Heart left ventricle (tissue), 16 donors: ENCODE measurements at regions of chr2 and their contacts with region 1.

Region 1: DNA sequence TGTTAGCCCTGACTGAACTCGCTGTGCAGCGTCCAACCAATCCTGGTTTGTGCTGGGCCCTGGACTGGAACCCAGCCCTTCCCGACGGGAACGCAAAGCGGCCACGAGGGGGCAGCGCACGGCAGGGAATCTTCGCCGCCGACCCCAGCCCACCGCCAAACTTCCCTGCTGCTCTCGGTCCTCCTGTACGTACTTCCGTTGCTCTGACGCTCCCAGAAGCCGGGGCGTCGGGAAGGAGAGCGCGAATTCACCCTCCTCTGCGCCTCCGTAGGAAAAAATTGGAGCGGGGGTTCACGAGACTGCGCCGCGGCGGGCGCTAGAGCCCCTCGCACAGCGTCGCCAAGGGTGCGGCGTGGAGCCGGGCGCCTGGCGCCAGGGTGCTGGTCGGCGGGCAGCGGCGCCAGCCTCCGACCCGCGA is 948 bp upstream of the SH3RF3 start:
- DNase-seq: peak; percentile 80 to 90 (median 86)
- ATAC-seq: peak; percentile 75 to 91 (median 89)
- H3K4me3 ChIP-seq: peak overlapping the region; percentile 64 to 80 (median 73)
- H3K27ac ChIP-seq: peak overlapping the region; percentile 55 to 86 (median 78)
- H3K4me1 ChIP-seq: peaks cover 0 to 35% (median 18%) of the 10 kb centered on the region in 12 donors
- H3K27me3 ChIP-seq: peaks cover 0 to 15% (median 0%) of the 10 kb centered on the region in 9 donors
- CTCF ChIP-seq: peak; percentile 82 to 97 (median 94)
- POLR2A ChIP-seq: no peak

Region 2: GRCh38 chr2:109046925-109047508 is 81.0 kb before region 1 on chr2:
- intact Hi-C with region 1: no loop called
- DNase-seq: no peak
- ATAC-seq: peak in 2 of 4 donors; percentile 49 to 50
- H3K4me3 ChIP-seq: no peak overlapping the region
- H3K27ac ChIP-seq: no peak overlapping the region
- H3K4me1 ChIP-seq: no peaks in the 10 kb centered on the region
- H3K27me3 ChIP-seq: no peaks in the 10 kb centered on the region
- CTCF ChIP-seq: no peak
- POLR2A ChIP-seq: no peak

Region 3: DNA sequence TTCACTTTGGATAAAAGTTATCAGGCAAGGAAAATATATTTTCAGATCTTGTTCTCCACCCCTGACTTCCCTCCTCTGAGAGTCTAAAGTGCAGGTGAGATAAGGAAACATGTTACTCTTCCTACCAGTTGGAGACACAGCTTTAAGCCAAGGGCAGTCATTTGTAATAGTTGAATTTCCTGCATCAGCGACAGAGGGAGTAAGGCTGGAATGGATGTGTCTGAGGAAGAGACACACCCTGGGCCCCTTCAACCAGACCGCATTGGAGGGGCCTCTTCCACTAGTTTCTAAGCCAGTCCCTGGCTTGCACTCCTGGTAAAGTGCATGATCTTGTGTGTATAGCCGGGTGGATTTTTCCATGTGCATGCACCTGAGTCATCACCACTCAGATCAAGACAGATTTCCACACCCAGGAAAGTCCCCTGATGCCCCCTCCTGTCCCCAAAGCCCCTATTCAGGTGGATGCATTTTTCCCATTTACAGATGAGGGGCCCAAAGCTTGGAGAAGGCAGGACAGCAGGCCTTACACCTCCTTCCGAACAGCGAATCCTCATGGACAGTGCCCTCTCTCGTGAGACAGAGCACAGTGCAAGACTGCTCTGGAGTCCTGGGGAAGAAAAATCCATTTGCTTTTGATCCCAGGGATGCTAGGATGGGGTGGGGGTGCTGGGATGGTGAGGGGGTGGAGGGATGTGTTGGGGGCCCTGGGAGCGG is 65.8 kb before region 1 on chr2:
- intact Hi-C with region 1: no loop called
- DNase-seq: no peak
- ATAC-seq: no peak
- H3K4me3 ChIP-seq: no peak overlapping the region
- H3K27ac ChIP-seq: no peak overlapping the region
- H3K4me1 ChIP-seq: peaks cover 0 to 29% (median 7%) of the 10 kb centered on the region in 12 donors
- H3K27me3 ChIP-seq: peaks cover 0 to 4% (median 0%) of the 10 kb centered on the region in 9 donors
- CTCF ChIP-seq: no peak
- POLR2A ChIP-seq: no peak

Region 4: DNA sequence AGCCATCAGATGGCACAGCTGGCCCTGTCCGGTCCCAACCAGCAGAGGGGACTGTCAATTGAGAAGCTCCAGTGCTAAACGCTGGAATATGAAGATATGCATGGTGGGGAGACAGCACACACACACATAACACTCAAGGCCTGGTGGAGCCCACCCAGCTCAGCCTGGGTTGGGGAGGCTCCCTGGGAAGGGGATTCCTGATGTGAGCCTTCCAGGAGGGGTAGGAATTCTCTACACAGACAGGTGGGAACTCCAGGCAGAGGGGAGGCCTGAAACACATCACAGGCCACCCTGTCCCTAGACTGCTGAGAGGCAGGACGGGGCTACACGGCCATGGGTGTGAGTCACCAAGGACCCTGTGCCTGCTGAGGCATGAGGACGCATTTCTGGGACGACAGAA is 48.5 kb before region 1 on chr2:
- intact Hi-C with region 1: no loop called
- DNase-seq: no peak
- ATAC-seq: peak in 1 of 4 donors; percentile 13
- H3K4me3 ChIP-seq: no peak overlapping the region
- H3K27ac ChIP-seq: no peak overlapping the region
- H3K4me1 ChIP-seq: no peaks in the 10 kb centered on the region
- H3K27me3 ChIP-seq: peaks cover 0 to 5% (median 0%) of the 10 kb centered on the region in 9 donors
- CTCF ChIP-seq: no peak
- POLR2A ChIP-seq: no peak

Region 5: DNA sequence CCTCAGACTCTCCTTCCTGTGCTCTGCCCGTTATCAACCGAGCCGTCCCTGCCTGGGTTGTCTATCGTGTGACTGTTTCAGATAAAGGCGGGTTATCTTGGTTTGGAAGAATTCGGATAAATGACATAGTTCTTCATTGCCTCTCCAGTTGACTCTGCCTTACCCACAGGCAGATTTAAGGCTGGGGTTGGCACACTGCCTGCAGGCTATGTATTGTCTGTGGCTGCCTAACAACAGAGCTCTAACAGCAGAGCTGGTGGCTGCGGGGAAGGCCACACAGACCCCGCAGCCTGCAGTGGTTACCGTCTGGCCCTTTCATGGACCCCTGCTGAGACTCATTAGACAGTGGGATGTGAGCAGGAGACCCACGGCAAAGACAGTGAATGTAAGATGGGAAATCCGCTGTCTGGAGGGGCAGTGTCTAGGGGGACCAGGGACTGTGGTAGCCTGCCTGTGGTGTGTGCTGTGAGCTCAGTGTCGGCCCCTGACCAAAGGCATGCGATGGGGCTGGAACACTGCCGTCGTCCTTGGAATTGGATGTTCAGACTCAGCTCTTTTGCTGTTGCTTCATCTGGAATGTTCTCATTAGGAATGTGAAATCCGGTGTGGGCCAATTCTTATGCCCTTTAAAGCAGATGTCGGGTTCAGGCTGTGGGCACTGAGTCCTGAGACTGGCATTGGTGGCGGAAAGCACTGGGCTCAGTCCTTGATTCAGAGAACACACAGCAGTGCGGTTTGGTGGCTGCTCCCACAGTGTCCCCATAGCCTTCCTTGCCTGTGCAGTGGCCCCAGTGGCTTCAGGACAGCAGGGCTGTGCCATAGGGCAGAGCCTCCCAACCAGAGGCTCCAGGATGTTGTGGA is 45.5 kb after region 1 on chr2:
- intact Hi-C with region 1: loop called in 2 of 10 experiments (anchors 5 kb)
- DNase-seq: peak in 4 of 5 donors; percentile 65 to 85 (median 74)
- ATAC-seq: peak; percentile 81 to 87 (median 86)
- H3K4me3 ChIP-seq: peak overlapping the region in 2 of 12 donors; percentile 7 to 10
- H3K27ac ChIP-seq: peak overlapping the region; percentile 66 to 94 (median 82)
- H3K4me1 ChIP-seq: peaks cover 2 to 65% (median 44%) of the 10 kb centered on the region in 12 donors
- H3K27me3 ChIP-seq: no peaks in the 10 kb centered on the region
- CTCF ChIP-seq: peak in 1 of 12 donors; percentile 11
- POLR2A ChIP-seq: no peak

Region 6: DNA sequence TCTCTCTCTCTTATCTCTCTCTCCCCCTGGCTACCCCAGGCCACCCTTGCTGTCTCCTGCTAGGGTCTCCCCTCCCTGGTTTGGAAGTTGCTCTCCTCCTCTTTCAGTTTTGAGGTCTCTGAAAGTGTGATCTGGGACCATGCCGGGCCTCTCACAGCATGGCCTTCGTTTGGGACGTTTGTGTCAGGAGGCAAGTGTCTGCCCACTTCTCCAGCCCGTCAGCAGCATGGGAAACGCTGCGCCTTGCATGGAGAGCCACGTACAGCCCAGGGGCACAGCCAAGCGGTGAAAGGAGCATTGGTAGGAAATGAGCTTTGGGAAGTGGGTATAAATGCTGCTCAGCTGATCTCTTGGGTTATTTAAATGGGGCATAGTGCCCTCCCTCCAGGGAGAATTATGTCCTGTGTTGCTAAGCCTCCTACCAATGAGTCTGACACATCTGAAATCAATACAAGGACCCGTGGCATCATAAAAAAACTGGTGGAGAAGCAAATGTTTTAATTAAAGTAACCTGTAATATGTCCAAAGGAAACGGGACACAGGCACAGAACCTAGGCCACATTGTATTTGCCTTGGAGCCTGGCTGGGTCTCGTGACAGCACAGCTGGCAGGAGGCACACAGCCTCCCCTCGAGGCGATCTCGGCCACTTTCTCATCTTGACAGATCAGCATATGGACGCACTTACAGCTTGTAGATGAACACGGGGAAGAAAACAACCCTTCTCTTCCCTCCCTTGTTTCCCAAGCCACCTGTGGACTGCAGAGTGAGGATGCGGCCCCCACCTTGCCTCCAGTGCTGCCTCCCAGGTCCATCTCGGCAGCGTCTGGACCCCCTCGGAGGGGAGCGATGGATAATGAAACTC is 73.6 kb after region 1 on chr2:
- intact Hi-C with region 1: loop called in 5 of 10 experiments (anchors 2 to 10 kb)
- DNase-seq: peak in 2 of 5 donors; percentile 71
- ATAC-seq: peak; percentile 47 to 79 (median 70)
- H3K4me3 ChIP-seq: no peak overlapping the region
- H3K27ac ChIP-seq: peak overlapping the region in 10 of 12 donors; percentile 44 to 72 (median 56)
- H3K4me1 ChIP-seq: peaks cover 0 to 44% (median 19%) of the 10 kb centered on the region in 12 donors
- H3K27me3 ChIP-seq: no peaks in the 10 kb centered on the region
- CTCF ChIP-seq: peak in 6 of 12 donors; percentile 10 to 32 (median 16)
- POLR2A ChIP-seq: no peak

Region 7: GRCh38 chr2:109260886-109261700 is 133.0 kb after region 1 on chr2:
- intact Hi-C with region 1: loop called in 1 of 10 experiments (anchors 10 kb)
- DNase-seq: peak in 1 of 5 donors; percentile 13
- ATAC-seq: peak in 3 of 4 donors; percentile 15 to 24 (median 23)
- H3K4me3 ChIP-seq: no peak overlapping the region
- H3K27ac ChIP-seq: no peak overlapping the region
- H3K4me1 ChIP-seq: peaks cover 7 to 54% (median 38%) of the 10 kb centered on the region in 12 donors
- H3K27me3 ChIP-seq: no peaks in the 10 kb centered on the region
- CTCF ChIP-seq: peak in 10 of 12 donors; percentile 10 to 36 (median 16)
- POLR2A ChIP-seq: no peak

Region 8: GRCh38 chr2:109396202-109397180 is 268.4 kb after region 1 on chr2:
- intact Hi-C with region 1: loop called in 3 of 10 experiments (anchors 5 to 10 kb)
- DNase-seq: no peak
- ATAC-seq: peak in 1 of 4 donors; percentile 38
- H3K4me3 ChIP-seq: no peak overlapping the region
- H3K27ac ChIP-seq: no peak overlapping the region
- H3K4me1 ChIP-seq: peaks cover 0 to 12% (median 0%) of the 10 kb centered on the region in 12 donors
- H3K27me3 ChIP-seq: no peaks in the 10 kb centered on the region
- CTCF ChIP-seq: peak in 2 of 12 donors; percentile 17 to 19
- POLR2A ChIP-seq: no peak

Region 9: GRCh38 chr2:109510136-109511028 is 382.3 kb after region 1 on chr2:
- intact Hi-C with region 1: loop called (anchors 1 to 2 kb)
- DNase-seq: peak; percentile 67 to 84 (median 78)
- ATAC-seq: peak; percentile 27 to 72 (median 65)
- H3K4me3 ChIP-seq: no peak overlapping the region
- H3K27ac ChIP-seq: no peak overlapping the region
- H3K4me1 ChIP-seq: peaks cover 0 to 12% (median 2%) of the 10 kb centered on the region in 12 donors
- H3K27me3 ChIP-seq: no peaks in the 10 kb centered on the region
- CTCF ChIP-seq: peak; percentile 85 to 96 (median 92)
- POLR2A ChIP-seq: no peak